ENCODE measurements at regions of chr22 and their contacts with region 1.

Region 1: GRCh38 chr22:30289134-30289979 is at the start of gene CASTOR1:
- DNase-seq: peak; percentile 67 to 93 (median 91)
- ATAC-seq: peak; percentile 82
- H3K4me3 ChIP-seq: peak within 1 kb of the TSS; percentile 72 to 76
- H3K4me3 Mint-ChIP-seq: peak within 1 kb of the TSS; percentile 90
- H3K27ac ChIP-seq: peak within 1 kb of the TSS; percentile 44 to 71
- H3K27ac Mint-ChIP-seq: peak within 1 kb of the TSS; percentile 84
- H3K4me1 ChIP-seq: peaks cover 34% of the 10 kb centered on the region
- H3K4me1 Mint-ChIP-seq: peaks cover 45% of the 10 kb centered on the region
- H3K27me3 ChIP-seq: no peaks in the 10 kb centered on the region
- H3K27me3 Mint-ChIP-seq: no peaks in the 10 kb centered on the region
- CTCF ChIP-seq: no peak
- total RNA-seq, gene CASTOR1: 17.2 to 21.9 TPM

Region 2: DNA sequence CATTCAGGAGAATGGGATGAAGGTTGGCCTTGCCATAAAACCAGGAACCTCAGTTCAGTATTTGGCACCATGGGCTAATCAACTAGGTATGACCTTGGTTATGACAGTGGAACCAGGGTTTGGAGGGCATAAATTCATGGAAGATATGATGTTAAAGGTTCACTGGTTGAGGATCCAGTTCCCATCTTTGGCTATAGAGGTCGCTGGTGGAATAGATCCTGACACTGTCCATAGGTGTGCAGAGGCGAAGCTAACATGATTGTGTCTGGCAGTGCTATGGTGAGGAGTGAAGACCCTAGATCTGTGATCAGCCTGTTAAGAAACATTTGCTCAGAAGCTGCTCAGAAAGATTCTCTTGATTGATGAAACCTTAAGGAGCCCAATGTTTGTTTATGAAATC is 680.2 kb before region 1 on chr22:
- CTCF ChIA-PET with region 1: no interaction called
- POLR2A ChIA-PET with region 1: no interaction called
- intact Hi-C with region 1: no loop called
- DNase-seq: no peak
- ATAC-seq: peak; percentile 36
- H3K4me3 ChIP-seq: no peak overlapping the region
- H3K4me3 Mint-ChIP-seq: no peak overlapping the region
- H3K27ac ChIP-seq: no peak overlapping the region
- H3K27ac Mint-ChIP-seq: no peak overlapping the region
- H3K4me1 ChIP-seq: peaks cover 23% of the 10 kb centered on the region
- H3K4me1 Mint-ChIP-seq: peaks cover 28% of the 10 kb centered on the region
- H3K27me3 ChIP-seq: no peaks in the 10 kb centered on the region
- H3K27me3 Mint-ChIP-seq: no peaks in the 10 kb centered on the region
- CTCF ChIP-seq: no peak

Region 3: DNA sequence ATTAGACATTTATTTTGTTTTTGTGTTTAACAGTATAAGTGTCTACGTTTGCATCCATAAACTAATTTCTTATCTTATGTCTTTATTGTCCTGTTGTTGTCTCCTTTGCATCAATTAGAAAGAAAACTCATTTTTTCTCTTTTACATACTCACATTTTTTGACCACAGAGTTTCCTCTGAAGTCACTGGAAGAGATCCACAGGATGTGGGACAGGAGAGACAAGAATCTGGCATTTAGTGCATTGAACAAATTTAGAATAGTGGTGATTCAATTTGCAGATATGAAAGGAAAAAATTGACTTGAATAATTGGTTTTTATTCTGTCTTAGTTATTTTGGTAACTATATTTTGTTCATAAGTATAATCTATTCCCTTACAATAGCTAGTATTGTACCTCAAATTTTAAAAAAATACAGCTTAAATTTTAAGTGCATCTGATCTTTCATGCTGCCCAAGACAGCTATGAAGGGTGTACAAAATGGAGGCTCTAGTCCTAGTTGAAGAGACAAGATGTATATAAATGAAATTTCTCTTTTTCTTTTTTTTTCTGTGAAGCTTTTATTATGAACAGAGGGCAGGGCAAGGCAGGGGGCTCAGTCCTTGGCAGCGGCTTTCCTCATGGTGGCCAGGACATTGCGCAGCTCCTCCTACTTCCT is 184.7 kb before region 1 on chr22:
- CTCF ChIA-PET with region 1: interaction called, 157 read pairs
- POLR2A ChIA-PET with region 1: interaction called, 8 read pairs
- intact Hi-C with region 1: loop called in 1 of 2 experiments (anchors 1 kb)
- DNase-seq: peak in 1 of 9 experiments; percentile 16
- ATAC-seq: no peak
- H3K4me3 ChIP-seq: no peak overlapping the region
- H3K4me3 Mint-ChIP-seq: no peak overlapping the region
- H3K27ac ChIP-seq: no peak overlapping the region
- H3K27ac Mint-ChIP-seq: no peak overlapping the region
- H3K4me1 ChIP-seq: peaks cover 14% of the 10 kb centered on the region
- H3K4me1 Mint-ChIP-seq: peaks cover 20% of the 10 kb centered on the region
- H3K27me3 ChIP-seq: no peaks in the 10 kb centered on the region
- H3K27me3 Mint-ChIP-seq: no peaks in the 10 kb centered on the region
- CTCF ChIP-seq: no peak

Region 4: DNA sequence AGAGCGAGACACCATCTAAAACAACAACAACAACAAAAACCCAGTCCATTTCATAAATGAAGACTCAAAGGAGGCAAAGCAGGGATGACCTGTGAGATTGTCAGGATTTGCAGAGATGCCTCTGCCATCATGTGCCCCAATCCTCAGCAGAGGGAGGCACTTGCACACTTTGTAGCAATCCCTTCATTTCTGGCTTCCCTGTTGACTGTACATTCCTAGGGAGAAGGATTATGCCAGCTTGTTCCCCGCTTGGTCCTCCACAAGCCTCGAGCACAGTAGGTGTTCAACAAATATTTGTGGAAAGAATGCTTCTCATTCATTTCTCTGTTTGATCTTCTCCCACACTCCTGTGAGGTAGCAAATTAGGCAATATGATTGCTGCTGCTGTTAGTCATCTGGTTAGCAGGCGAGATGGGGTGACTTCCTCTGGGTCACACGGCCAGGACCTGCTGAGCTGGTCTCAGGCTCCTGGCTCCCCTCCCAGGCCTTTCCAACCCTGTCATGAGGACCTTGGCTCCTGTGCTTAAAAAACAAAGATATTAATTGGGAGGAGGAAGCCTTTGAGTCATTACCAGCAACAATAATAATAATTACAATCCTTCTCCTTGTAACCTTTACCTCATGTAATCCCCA is 76.9 kb before region 1 on chr22:
- CTCF ChIA-PET with region 1: no interaction called
- POLR2A ChIA-PET with region 1: no interaction called
- intact Hi-C with region 1: no loop called
- DNase-seq: peak in 1 of 9 experiments; percentile 37
- ATAC-seq: no peak
- H3K4me3 ChIP-seq: no peak overlapping the region
- H3K4me3 Mint-ChIP-seq: no peak overlapping the region
- H3K27ac ChIP-seq: no peak overlapping the region
- H3K27ac Mint-ChIP-seq: no peak overlapping the region
- H3K4me1 ChIP-seq: no peaks in the 10 kb centered on the region
- H3K4me1 Mint-ChIP-seq: peaks cover 3% of the 10 kb centered on the region
- H3K27me3 ChIP-seq: no peaks in the 10 kb centered on the region
- H3K27me3 Mint-ChIP-seq: no peaks in the 10 kb centered on the region
- CTCF ChIP-seq: no peak

Region 5: DNA sequence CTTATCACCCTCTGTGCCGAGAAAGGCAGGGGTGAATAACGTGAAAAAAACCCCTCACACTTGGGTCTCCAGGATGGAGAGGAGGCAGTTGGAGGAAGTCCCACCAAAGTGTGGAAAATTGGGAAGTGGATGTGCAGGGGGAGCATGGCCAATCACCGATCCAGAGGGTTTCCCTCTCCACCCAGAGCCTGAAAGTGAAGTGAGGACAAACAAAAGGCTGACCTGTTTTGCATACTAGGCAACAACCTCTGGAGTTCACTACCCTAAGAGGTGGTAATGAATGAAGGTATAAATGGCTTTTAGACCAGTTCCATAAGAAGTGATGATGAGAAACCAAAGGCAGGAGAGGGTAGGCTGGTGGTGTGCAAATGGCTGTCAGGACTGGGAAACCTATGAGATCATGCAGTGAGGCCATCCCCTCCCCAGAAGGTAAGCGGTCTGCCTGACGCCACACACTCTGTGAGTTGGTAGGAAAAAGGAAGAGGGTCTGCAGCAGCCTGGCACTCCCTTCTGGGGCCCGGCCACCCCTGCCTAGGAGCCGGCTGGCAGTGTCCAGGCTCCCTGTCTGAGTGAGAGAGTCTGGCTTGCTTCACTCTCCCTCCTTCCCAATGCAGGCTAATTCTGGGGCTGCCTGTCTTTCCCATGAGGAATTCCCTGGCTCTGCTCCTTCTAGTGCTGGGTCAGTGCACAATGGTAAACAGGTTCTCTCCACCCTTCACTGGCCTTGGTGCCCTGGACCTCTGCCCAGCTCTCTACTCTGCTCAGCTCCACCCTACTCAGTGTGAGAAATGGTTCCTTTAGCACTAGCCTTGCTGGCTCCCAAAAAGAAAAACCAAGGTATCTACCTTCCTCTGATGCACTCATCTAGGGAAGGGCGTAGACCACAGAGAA is 21.8 kb after region 1 on chr22:
- CTCF ChIA-PET with region 1: interaction called, 146 read pairs
- POLR2A ChIA-PET with region 1: interaction called, 130 read pairs
- intact Hi-C with region 1: loop called (anchors 1 kb)
- DNase-seq: no peak
- ATAC-seq: no peak
- H3K4me3 ChIP-seq: no peak overlapping the region
- H3K4me3 Mint-ChIP-seq: peak overlapping the region; percentile 63
- H3K27ac ChIP-seq: peak overlapping the region; percentile 53 to 77
- H3K27ac Mint-ChIP-seq: peak overlapping the region; percentile 98
- H3K4me1 ChIP-seq: peaks cover 98% of the 10 kb centered on the region
- H3K4me1 Mint-ChIP-seq: peaks cover 96% of the 10 kb centered on the region
- H3K27me3 ChIP-seq: no peaks in the 10 kb centered on the region
- H3K27me3 Mint-ChIP-seq: no peaks in the 10 kb centered on the region
- CTCF ChIP-seq: no peak

Region 6: GRCh38 chr22:30347255-30347892 is 58.0 kb after region 1 on chr22:
- CTCF ChIA-PET with region 1: interaction called, 101 read pairs
- POLR2A ChIA-PET with region 1: interaction called, 4 read pairs
- intact Hi-C with region 1: no loop called
- DNase-seq: no peak
- ATAC-seq: no peak
- H3K4me3 ChIP-seq: no peak overlapping the region
- H3K4me3 Mint-ChIP-seq: no peak overlapping the region
- H3K27ac ChIP-seq: no peak overlapping the region
- H3K27ac Mint-ChIP-seq: peak overlapping the region; percentile 11
- H3K4me1 ChIP-seq: peaks cover 31% of the 10 kb centered on the region
- H3K4me1 Mint-ChIP-seq: peaks cover 39% of the 10 kb centered on the region
- H3K27me3 ChIP-seq: no peaks in the 10 kb centered on the region
- H3K27me3 Mint-ChIP-seq: no peaks in the 10 kb centered on the region
- CTCF ChIP-seq: no peak

Region 7: DNA sequence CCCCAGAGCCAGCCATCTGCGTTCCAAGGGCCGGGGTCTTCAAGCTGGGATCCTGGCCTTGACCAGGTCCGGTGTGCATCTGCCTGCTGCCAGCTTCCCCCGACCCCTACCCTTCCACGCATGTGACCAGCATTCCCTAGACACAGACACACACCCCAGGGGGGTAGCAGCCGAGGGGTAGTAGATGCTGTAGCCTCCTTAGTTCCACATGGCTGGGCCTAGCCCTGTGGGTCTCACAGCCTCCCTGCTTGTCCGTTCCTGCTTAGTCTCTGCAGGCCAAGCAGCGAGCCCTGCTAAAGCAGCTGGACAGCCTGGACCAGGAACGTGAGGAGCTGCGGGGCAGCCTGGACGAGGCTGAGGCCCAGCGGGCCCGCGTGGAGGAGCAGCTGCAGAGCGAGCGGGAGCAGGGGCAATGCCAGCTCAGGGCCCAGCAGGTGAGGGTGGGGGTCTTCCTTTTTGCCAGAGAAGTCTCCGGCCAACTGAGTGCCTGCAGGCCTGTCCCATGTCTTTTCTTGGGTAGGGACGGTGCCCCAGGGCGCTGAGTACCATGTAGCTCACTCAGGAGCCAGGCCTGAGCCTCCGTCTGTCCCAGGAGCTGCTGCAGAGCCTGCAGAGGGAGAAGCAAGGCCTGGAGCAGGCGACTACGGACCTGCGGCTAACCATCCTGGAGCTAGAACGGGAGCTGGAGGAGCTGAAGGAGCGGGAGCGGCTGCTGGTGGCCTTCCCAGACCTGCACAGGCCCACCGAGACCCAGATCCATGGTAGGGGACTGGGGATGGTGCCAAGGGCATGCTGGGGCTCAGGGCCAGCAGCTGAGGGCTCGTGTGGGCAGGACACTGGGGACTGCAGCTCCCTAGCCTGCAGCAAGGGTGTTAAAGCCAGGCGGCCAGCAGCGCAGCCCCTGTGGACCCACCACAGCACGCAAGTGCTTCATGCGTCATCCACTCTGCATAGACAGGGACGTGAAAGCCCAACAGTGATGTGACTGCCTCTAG is 84.3 kb after region 1 on chr22:
- CTCF ChIA-PET with region 1: interaction called, 16 read pairs
- POLR2A ChIA-PET with region 1: no interaction called
- intact Hi-C with region 1: no loop called
- DNase-seq: peak in 1 of 9 experiments; percentile 14
- ATAC-seq: no peak
- H3K4me3 ChIP-seq: no peak overlapping the region
- H3K4me3 Mint-ChIP-seq: no peak overlapping the region
- H3K27ac ChIP-seq: no peak overlapping the region
- H3K27ac Mint-ChIP-seq: no peak overlapping the region
- H3K4me1 ChIP-seq: no peaks in the 10 kb centered on the region
- H3K4me1 Mint-ChIP-seq: no peaks in the 10 kb centered on the region
- H3K27me3 ChIP-seq: no peaks in the 10 kb centered on the region
- H3K27me3 Mint-ChIP-seq: no peaks in the 10 kb centered on the region
- CTCF ChIP-seq: no peak

Region 8: DNA sequence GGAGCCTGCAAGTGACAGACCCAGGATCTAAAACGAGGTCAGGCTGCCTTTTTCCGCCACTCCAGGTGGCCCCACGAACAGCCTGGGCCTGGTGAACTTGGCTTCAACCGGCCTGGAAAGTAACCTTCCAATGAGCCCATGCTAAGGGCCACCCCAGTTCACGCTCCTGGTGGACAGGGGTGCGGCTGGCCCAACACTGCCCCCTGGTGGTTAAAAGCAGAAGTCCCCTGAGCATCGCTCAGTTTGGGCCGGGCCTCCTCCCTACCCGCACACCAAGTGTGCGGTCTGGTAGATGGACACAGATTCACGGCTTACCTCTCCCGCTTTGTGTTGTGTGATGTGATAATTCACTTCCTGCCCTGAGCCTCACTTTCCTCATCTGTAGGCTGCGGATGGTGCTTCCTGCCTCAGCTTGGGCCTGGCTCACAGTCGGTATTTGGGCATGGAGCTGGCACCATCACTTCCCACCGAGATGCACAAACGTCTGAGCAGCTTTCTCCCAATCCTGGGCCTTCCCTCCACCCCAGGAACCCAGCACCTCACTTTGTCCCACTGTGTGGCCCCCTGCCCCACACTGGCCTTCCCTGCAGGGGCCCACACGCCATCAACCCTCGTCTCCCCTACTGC is 196.1 kb after region 1 on chr22:
- CTCF ChIA-PET with region 1: interaction called, 24 read pairs
- POLR2A ChIA-PET with region 1: no interaction called
- intact Hi-C with region 1: loop called (anchors 1 kb)
- DNase-seq: peak; percentile 60 to 85 (median 75)
- ATAC-seq: peak; percentile 98
- H3K4me3 ChIP-seq: no peak overlapping the region
- H3K4me3 Mint-ChIP-seq: no peak overlapping the region
- H3K27ac ChIP-seq: no peak overlapping the region
- H3K27ac Mint-ChIP-seq: no peak overlapping the region
- H3K4me1 ChIP-seq: no peaks in the 10 kb centered on the region
- H3K4me1 Mint-ChIP-seq: no peaks in the 10 kb centered on the region
- H3K27me3 ChIP-seq: no peaks in the 10 kb centered on the region
- H3K27me3 Mint-ChIP-seq: peaks cover 2% of the 10 kb centered on the region
- CTCF ChIP-seq: peak; percentile 95